ENCODE measurements at regions of chr16 and their contacts with region 1.

Region 1: DNA sequence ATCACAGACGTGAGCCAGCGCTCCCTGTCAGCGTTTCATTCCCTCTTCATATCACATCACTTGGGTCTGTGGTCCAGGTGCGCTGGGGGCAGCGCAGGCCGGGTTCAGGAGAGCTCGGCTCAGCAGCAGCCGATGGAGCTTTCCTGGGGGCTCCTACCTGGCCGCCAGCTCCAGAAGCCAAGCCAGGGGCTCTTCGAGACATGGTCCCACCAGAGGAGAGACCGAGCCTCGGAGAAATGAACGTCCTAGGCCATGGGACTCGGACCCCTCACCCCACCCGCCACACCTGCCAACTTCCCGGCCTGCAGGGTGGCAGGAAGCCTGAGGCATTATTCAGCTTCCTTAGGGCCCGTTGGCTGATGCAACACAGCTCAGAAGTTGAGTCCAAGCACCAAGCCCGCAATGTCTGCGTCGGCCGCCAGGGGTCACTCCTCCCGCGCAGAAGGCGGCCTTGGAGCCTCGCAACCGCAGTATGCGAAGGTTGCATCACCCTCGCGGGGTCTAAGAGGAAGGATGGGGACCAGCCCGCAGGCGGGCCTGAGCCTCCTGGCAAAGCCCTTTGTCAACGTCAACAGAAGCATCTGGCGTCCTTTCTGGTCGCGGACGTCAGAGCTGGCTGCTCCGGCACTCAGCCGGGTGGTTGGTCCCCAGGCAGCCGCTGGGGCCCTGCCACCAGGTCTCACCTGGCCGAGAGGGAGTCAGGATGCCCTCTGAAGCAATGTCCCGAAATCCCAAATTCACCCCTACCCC is 13.2 kb upstream of the KLHDC4 start:
- DNase-seq: peak; percentile 94
- H3K4me3 Mint-ChIP-seq: peak overlapping the region; percentile 12
- H3K27ac Mint-ChIP-seq: peak overlapping the region; percentile 95
- H3K4me1 Mint-ChIP-seq: peaks cover 55% of the 10 kb centered on the region
- H3K27me3 Mint-ChIP-seq: no peaks in the 10 kb centered on the region

Region 2: GRCh38 chr16:87712184-87712762 is 66.7 kb before region 1 on chr16:
- CTCF ChIA-PET with region 1: no interaction called
- POLR2A ChIA-PET with region 1: no interaction called
- DNase-seq: no peak
- H3K4me3 Mint-ChIP-seq: no peak overlapping the region
- H3K27ac Mint-ChIP-seq: peak overlapping the region; percentile 96
- H3K4me1 Mint-ChIP-seq: peaks cover 34% of the 10 kb centered on the region
- H3K27me3 Mint-ChIP-seq: no peaks in the 10 kb centered on the region

Region 3: GRCh38 chr16:87765776-87766484 is 13.1 kb before region 1 on chr16 and contains the start of gene KLHDC4:
- CTCF ChIA-PET with region 1: interaction called, 25 read pairs
- POLR2A ChIA-PET with region 1: interaction called, 4 read pairs
- DNase-seq: peak; percentile 92
- H3K4me3 Mint-ChIP-seq: peak within 1 kb of the TSS; percentile 96
- H3K27ac Mint-ChIP-seq: peak within 1 kb of the TSS; percentile 98
- H3K4me1 Mint-ChIP-seq: peaks cover 46% of the 10 kb centered on the region
- H3K27me3 Mint-ChIP-seq: no peaks in the 10 kb centered on the region
- total RNA-seq, gene KLHDC4: 83.2 to 102 TPM

Region 4: DNA sequence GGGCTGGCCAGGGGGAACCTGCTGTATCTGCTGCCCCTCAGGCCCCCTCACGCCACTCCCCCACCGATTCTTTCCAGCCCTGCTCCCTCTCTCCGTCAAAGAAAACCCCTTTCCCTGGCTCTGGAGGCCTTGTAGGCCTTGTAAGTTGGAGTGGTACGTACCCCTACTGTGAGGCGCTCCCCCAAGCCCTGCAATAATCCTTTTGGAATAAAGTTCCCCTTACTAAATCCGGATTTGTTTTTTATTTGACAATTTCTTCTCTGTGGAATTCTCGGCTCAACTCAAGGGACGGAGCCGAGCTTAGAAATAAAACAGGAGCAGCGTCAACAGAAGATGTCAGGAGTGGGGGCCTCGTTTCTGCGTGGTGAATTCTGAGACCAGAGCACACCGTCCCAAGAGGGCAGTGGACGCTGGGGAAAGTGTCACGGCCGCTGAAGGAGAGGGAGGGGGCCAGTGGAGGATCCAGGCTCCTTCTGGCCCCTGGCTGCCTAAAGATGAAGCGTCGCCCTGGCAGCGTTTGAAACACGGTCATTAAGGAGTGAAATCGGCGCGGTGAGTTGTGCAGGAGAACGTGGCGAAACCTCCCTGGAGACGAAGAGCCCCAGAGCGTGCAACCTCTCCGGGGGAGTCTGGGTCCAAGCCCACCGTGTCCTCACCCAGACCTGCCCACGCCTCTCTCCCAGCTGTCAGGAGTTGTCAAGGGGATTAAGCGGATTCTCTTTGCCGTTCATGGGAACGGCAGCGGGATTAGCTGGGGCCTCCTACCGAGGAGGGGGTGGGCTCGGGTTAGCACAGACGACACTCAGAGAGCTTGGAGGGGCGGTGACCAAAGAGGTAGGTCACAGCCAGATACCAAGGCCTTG is 43.3 kb after region 1 on chr16:
- CTCF ChIA-PET with region 1: interaction called, 17 read pairs
- POLR2A ChIA-PET with region 1: no interaction called
- DNase-seq: no peak
- H3K4me3 Mint-ChIP-seq: no peak overlapping the region
- H3K27ac Mint-ChIP-seq: peak overlapping the region; percentile 17
- H3K4me1 Mint-ChIP-seq: peaks cover 15% of the 10 kb centered on the region
- H3K27me3 Mint-ChIP-seq: no peaks in the 10 kb centered on the region

Region 5: GRCh38 chr16:87845213-87845612 is 66.2 kb after region 1 on chr16:
- CTCF ChIA-PET with region 1: interaction called, 48 read pairs
- POLR2A ChIA-PET with region 1: no interaction called
- DNase-seq: no peak
- H3K4me3 Mint-ChIP-seq: no peak overlapping the region
- H3K27ac Mint-ChIP-seq: no peak overlapping the region
- H3K4me1 Mint-ChIP-seq: peaks cover 16% of the 10 kb centered on the region
- H3K27me3 Mint-ChIP-seq: no peaks in the 10 kb centered on the region

Region 6: DNA sequence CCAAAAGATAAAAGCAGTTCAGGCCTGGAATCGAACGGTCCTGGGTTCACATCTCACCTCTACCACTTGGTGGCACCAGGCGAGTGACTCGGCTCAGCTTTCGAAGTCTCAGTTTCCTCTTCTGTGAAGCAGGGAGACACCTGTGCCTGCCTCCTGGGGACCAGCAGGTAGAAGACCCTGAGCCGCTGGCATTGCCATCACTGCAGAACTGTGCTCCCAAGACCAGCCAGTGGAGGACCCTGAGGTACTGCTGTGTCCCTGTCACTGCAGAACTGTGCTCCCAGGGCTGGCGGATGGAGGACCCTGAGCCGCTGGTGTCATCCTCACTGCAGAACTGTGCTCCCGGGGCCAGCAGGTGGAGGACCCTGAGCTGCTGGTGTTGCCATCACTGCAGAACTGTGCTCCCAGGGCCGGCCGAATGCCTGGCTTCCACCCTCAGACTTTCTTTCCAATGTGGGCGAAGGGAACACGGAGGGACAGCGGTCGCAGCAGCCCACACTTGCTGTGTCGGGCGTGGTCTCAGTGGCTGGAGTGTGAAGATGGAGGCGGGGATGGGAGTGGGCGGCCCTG is 99.0 kb after region 1 on chr16:
- CTCF ChIA-PET with region 1: interaction called, 249 read pairs
- POLR2A ChIA-PET with region 1: interaction called, 3 read pairs
- DNase-seq: no peak
- H3K4me3 Mint-ChIP-seq: no peak overlapping the region
- H3K27ac Mint-ChIP-seq: no peak overlapping the region
- H3K4me1 Mint-ChIP-seq: peaks cover 20% of the 10 kb centered on the region
- H3K27me3 Mint-ChIP-seq: no peaks in the 10 kb centered on the region

Region 7: GRCh38 chr16:87950765-87951549 is 172.0 kb after region 1 on chr16 and contains the start of gene BANP:
- CTCF ChIA-PET with region 1: interaction called, 25 read pairs
- POLR2A ChIA-PET with region 1: interaction called, 3 read pairs
- DNase-seq: peak; percentile 98
- H3K4me3 Mint-ChIP-seq: peak within 1 kb of the TSS; percentile 91
- H3K27ac Mint-ChIP-seq: peak within 1 kb of the TSS; percentile 99
- H3K4me1 Mint-ChIP-seq: peaks cover 71% of the 10 kb centered on the region
- H3K27me3 Mint-ChIP-seq: no peaks in the 10 kb centered on the region
- total RNA-seq, gene BANP: 43.2 to 45.5 TPM

Measured in activated CD4-positive, alpha-beta T cell treated with anti-CD3 and anti-CD28 coated beads, Interleukin-2, amount 10 ng/mL, durations not matched to agents 7 days and 5 days (primary cell).